ENCODE measurements at regions of chr12 and their contacts with region 1.

Region 1: GRCh38 chr12:71392521-71393145 is 47.0 kb upstream of the LGR5 start:
- DNase-seq: peak in 1 of 2 experiments; percentile 34
- H3K4me3 ChIP-seq: no peak overlapping the region
- H3K4me3 Mint-ChIP-seq: no peak overlapping the region
- H3K27ac Mint-ChIP-seq: no peak overlapping the region
- H3K4me1 ChIP-seq: no peaks in the 10 kb centered on the region
- H3K4me1 Mint-ChIP-seq: no peaks in the 10 kb centered on the region
- H3K27me3 ChIP-seq: no peaks in the 10 kb centered on the region
- H3K27me3 Mint-ChIP-seq: peaks cover 3% of the 10 kb centered on the region
- CTCF ChIP-seq: peak; percentile 61 to 75

Region 2: DNA sequence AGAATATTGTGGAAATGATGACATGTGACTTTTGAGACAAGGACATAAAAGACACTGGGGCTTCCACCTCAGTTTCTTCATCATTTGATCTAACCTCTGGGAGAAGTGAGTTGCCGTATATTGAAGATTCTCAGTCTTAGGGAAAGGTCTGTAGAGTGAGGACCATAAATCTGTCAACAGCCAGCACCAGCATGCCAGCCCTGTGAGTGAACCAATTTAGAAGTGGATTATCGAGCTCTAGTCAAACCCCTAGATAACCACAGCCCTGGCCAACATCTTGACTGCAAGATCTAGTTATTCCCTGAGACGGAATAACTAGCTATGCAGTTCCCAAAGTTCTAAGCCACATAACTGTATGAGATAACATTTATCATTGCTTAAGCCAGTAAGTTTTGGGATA is 363.3 kb before region 1 on chr12:
- CTCF ChIA-PET with region 1: no interaction called
- POLR2A ChIA-PET with region 1: no interaction called
- intact Hi-C with region 1: loop called (anchors 10 kb)
- DNase-seq: no peak
- H3K4me3 ChIP-seq: no peak overlapping the region
- H3K4me3 Mint-ChIP-seq: no peak overlapping the region
- H3K27ac Mint-ChIP-seq: no peak overlapping the region
- H3K4me1 ChIP-seq: 0 out of 2 replicates have a peak, but pooled peaks cover 8% of the 10 kb centered on the region
- H3K4me1 Mint-ChIP-seq: peaks cover 13% of the 10 kb centered on the region
- H3K27me3 ChIP-seq: no peaks in the 10 kb centered on the region
- H3K27me3 Mint-ChIP-seq: no peaks in the 10 kb centered on the region
- CTCF ChIP-seq: no peak

Region 3: GRCh38 chr12:71125515-71125914 is 267.1 kb before region 1 on chr12:
- CTCF ChIA-PET with region 1: interaction called, 12 read pairs
- POLR2A ChIA-PET with region 1: no interaction called
- intact Hi-C with region 1: loop called (anchors 1 kb)
- DNase-seq: no peak
- H3K4me3 ChIP-seq: no peak overlapping the region
- H3K4me3 Mint-ChIP-seq: no peak overlapping the region
- H3K27ac Mint-ChIP-seq: no peak overlapping the region
- H3K4me1 ChIP-seq: no peaks in the 10 kb centered on the region
- H3K4me1 Mint-ChIP-seq: no peaks in the 10 kb centered on the region
- H3K27me3 ChIP-seq: no peaks in the 10 kb centered on the region
- H3K27me3 Mint-ChIP-seq: no peaks in the 10 kb centered on the region
- CTCF ChIP-seq: peak in 1 of 2 experiments; percentile 25

Region 4: GRCh38 chr12:71216725-71217579 is 175.7 kb before region 1 on chr12:
- CTCF ChIA-PET with region 1: no interaction called
- POLR2A ChIA-PET with region 1: no interaction called
- intact Hi-C with region 1: loop called (anchors 1 kb)
- DNase-seq: peak; percentile 49 to 54
- H3K4me3 ChIP-seq: no peak overlapping the region
- H3K4me3 Mint-ChIP-seq: no peak overlapping the region
- H3K27ac Mint-ChIP-seq: no peak overlapping the region
- H3K4me1 ChIP-seq: peaks cover 18% of the 10 kb centered on the region
- H3K4me1 Mint-ChIP-seq: peaks cover 13% of the 10 kb centered on the region
- H3K27me3 ChIP-seq: no peaks in the 10 kb centered on the region
- H3K27me3 Mint-ChIP-seq: no peaks in the 10 kb centered on the region
- CTCF ChIP-seq: peak; percentile 39 to 43

Region 5: DNA sequence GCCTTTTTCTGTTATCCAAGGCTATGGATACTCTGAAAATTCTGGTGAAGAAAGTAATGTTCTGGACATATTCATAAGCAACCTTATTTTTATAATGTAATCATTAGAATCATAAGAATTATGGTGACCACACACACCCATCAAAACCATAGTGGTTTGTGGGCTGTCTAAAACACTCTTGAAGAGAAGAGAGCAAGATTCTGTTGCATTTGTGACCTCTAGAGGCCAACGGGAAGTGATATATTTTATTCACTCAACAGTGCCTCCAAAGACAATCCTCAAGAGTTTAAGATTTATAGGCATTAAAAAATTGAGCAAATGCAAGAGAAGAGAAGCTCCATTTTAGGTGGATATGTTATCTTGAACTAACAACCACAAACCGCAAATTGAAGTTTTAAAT is 21.5 kb before region 1 on chr12:
- CTCF ChIA-PET with region 1: no interaction called
- POLR2A ChIA-PET with region 1: no interaction called
- intact Hi-C with region 1: no loop called
- DNase-seq: peak in 1 of 2 experiments; percentile 2
- H3K4me3 ChIP-seq: no peak overlapping the region
- H3K4me3 Mint-ChIP-seq: no peak overlapping the region
- H3K27ac Mint-ChIP-seq: no peak overlapping the region
- H3K4me1 ChIP-seq: peaks cover 3% of the 10 kb centered on the region; the same call in 1 of the 2 replicates
- H3K4me1 Mint-ChIP-seq: no peaks in the 10 kb centered on the region
- H3K27me3 ChIP-seq: no peaks in the 10 kb centered on the region
- H3K27me3 Mint-ChIP-seq: no peaks in the 10 kb centered on the region
- CTCF ChIP-seq: peak in 1 of 2 experiments; percentile 22

Measured in Caco-2 (cell line).